ENCODE measurements at regions of chr22 and their contacts with region 1.

Region 1: DNA sequence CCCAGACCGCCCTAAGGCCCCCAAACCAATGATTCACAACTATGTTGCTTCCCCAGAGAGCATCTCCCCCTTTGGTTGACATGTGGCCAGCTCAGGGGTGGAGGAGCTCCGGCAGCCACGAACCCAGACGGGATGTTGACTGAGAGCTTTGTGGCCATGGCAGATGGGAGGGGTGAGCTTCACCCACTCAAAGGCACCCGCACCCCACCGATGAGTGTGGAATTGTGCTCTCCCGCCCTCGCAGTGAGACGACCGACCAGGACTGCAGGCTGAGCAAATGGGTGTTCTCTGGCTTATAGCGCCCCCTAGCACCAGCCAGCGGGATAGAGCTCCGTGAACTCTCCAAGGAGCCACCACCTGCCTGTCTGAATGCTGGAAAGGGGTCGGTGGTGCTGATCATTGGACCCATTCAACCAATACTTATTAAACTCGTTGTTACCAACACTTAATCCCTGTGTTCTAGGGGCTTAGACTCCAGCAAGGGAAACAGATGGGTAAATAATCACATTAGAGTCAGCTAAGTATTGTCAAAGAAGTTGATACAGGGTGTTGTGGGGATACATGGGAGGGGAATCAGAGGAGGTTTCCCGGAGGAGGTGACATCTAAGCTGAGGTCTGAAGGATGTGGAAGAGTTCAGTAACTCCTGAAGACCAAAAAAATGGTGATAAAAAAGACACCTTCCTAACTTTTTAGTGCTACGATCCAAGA is 4.5 kb upstream of the TIMP3 start:
- DNase-seq: peak; percentile 70
- ATAC-seq: peak; percentile 85
- H3K4me3 Mint-ChIP-seq: no peak overlapping the region
- H3K27ac Mint-ChIP-seq: no peak overlapping the region
- H3K4me1 Mint-ChIP-seq: peaks cover 4% of the 10 kb centered on the region
- H3K27me3 Mint-ChIP-seq: peaks cover 32% of the 10 kb centered on the region

Region 2: GRCh38 chr22:32528984-32529982 is 267.7 kb before region 1 on chr22:
- CTCF ChIA-PET with region 1: interaction called, 36 read pairs
- POLR2A ChIA-PET with region 1: no interaction called
- DNase-seq: peak; percentile 78
- ATAC-seq: peak; percentile 69
- H3K4me3 Mint-ChIP-seq: no peak overlapping the region
- H3K27ac Mint-ChIP-seq: no peak overlapping the region
- H3K4me1 Mint-ChIP-seq: no peaks in the 10 kb centered on the region
- H3K27me3 Mint-ChIP-seq: no peaks in the 10 kb centered on the region

Region 3: DNA sequence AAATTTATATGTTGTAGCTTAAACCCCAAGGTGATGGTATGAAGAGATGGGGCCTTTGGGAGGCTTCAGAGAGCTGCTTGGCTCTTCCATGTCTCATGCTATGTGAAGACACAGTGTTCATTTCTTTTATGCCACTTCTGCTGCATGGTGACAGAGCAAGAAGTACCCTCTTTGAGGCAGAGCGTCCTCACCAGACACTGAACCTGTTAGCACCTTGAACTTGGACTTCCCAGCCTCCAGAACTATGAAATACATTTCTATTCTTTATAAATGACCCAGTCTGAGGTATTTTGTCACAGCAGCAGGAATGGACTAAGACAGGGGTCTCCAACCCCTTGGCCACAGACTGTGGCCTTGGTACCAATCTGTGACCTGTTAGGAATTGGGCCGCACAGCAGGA is 142.0 kb before region 1 on chr22:
- CTCF ChIA-PET with region 1: interaction called, 163 read pairs
- POLR2A ChIA-PET with region 1: interaction called, 6 read pairs
- DNase-seq: no peak
- ATAC-seq: no peak
- H3K4me3 Mint-ChIP-seq: no peak overlapping the region
- H3K27ac Mint-ChIP-seq: no peak overlapping the region
- H3K4me1 Mint-ChIP-seq: no peaks in the 10 kb centered on the region
- H3K27me3 Mint-ChIP-seq: peaks cover 11% of the 10 kb centered on the region

Region 4: DNA sequence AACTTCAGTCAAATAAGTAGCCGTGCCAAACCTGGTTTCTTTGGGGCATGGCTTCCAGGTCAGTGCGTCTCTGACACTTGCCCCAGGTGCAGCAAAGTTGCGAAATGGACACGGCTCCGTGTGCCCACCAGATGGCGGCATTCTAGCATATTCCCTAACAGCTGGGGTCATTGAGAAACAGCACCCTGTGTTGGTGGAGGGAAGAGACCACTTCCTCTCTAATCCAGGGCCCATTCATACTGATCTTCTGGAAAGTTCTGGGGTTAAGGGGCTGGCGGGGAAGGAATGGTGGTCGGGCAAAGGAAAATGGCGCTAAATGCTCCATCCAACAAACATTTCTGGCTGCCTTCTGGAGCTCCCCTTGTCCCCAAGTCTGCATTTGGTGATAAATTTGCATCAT is 136.7 kb before region 1 on chr22:
- CTCF ChIA-PET with region 1: interaction called, 163 read pairs
- POLR2A ChIA-PET with region 1: interaction called, 6 read pairs
- DNase-seq: peak; percentile 70
- ATAC-seq: no peak
- H3K4me3 Mint-ChIP-seq: no peak overlapping the region
- H3K27ac Mint-ChIP-seq: no peak overlapping the region
- H3K4me1 Mint-ChIP-seq: no peaks in the 10 kb centered on the region
- H3K27me3 Mint-ChIP-seq: peaks cover 11% of the 10 kb centered on the region

Region 5: DNA sequence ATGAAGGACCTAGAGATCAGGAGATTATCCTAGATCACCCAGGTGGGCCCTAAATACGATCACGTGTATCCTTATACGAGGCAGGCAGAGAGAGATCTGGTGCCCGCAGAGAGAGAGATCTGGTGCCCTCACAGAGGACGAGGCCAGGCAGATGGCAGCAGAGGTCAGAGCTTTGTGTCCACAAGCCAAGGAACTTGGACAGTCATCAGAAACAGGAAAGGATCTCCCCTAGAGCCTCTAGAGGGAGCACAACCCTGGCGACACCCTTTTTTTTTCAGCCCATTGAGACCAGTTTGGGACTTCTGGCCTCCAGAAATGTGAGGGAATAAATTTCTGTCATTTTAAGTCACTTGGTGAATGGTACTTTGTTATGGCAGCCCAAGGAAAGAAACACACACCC is 21.1 kb before region 1 on chr22:
- CTCF ChIA-PET with region 1: interaction called, 12 read pairs
- POLR2A ChIA-PET with region 1: no interaction called
- DNase-seq: no peak
- ATAC-seq: no peak
- H3K4me3 Mint-ChIP-seq: no peak overlapping the region
- H3K27ac Mint-ChIP-seq: no peak overlapping the region
- H3K4me1 Mint-ChIP-seq: peaks cover 9% of the 10 kb centered on the region
- H3K27me3 Mint-ChIP-seq: peaks cover 6% of the 10 kb centered on the region

Region 6: DNA sequence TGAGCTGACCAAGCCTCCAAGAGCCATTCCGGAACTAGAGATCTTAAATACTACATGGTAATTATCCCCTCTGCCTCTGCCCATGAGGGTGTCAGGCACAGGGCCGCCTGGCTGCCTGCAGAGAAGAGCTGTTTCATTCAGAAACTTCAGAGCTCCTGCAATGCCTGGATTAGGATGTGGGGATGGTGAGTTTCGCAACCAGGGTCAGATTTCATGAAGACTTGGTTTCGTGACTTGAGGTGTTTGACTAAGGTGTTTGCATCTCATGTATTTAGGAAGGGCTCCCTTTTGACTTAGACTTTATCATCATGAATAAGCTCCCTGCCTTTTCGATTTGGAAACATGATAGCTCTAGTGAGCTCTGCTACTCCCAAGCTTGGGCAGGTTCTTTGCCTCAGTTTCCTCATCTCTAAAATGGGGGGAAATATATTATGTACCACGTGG is 13.6 kb after region 1 on chr22:
- CTCF ChIA-PET with region 1: interaction called, 24 read pairs
- POLR2A ChIA-PET with region 1: no interaction called
- DNase-seq: no peak
- ATAC-seq: no peak
- H3K4me3 Mint-ChIP-seq: no peak overlapping the region
- H3K27ac Mint-ChIP-seq: no peak overlapping the region
- H3K4me1 Mint-ChIP-seq: no peaks in the 10 kb centered on the region
- H3K27me3 Mint-ChIP-seq: peaks cover 5% of the 10 kb centered on the region